CD4-positive, alpha-beta T cell (primary cell): ENCODE measurements at regions of chr16 and their contacts with region 1.

Region 1: GRCh38 chr16:56681939-56682702 is at the start of gene MT1X:
- DNase-seq: peak; percentile 72 to 94 (median 86)
- ATAC-seq: peak; percentile 99
- H3K4me3 ChIP-seq: peak within 1 kb of the TSS; percentile 83
- H3K4me3 Mint-ChIP-seq: peak within 1 kb of the TSS; percentile 96
- H3K27ac ChIP-seq: peak within 1 kb of the TSS; percentile 50 to 71
- H3K27ac Mint-ChIP-seq: peak within 1 kb of the TSS; percentile 93
- H3K4me1 ChIP-seq: peaks cover 28% of the 10 kb centered on the region
- H3K4me1 Mint-ChIP-seq: peaks cover 27% of the 10 kb centered on the region
- H3K27me3 ChIP-seq: no peaks in the 10 kb centered on the region
- H3K27me3 Mint-ChIP-seq: no peaks in the 10 kb centered on the region
- CTCF ChIP-seq: no peak
- total RNA-seq, gene MT1X: 10.9 to 14.1 TPM

Region 2: GRCh38 chr16:56591377-56592060 is 90.6 kb before region 1 on chr16:
- CTCF ChIA-PET with region 1: no interaction called
- POLR2A ChIA-PET with region 1: no interaction called
- intact Hi-C with region 1: no loop called
- DNase-seq: no peak
- ATAC-seq: no peak
- H3K4me3 ChIP-seq: no peak overlapping the region
- H3K4me3 Mint-ChIP-seq: no peak overlapping the region
- H3K27ac ChIP-seq: no peak overlapping the region
- H3K27ac Mint-ChIP-seq: no peak overlapping the region
- H3K4me1 ChIP-seq: peaks cover 12% of the 10 kb centered on the region
- H3K4me1 Mint-ChIP-seq: peaks cover 9% of the 10 kb centered on the region
- H3K27me3 ChIP-seq: peaks cover 17 to 18% of the 10 kb centered on the region in 2 experiments
- H3K27me3 Mint-ChIP-seq: peaks cover 26% of the 10 kb centered on the region
- CTCF ChIP-seq: no peak

Region 3: GRCh38 chr16:56667581-56668571 is 14.2 kb before region 1 on chr16 and contains the start of gene MT1G:
- CTCF ChIA-PET with region 1: no interaction called
- POLR2A ChIA-PET with region 1: interaction called, 11 read pairs
- intact Hi-C with region 1: no loop called
- DNase-seq: peak in 5 of 14 experiments; percentile 4 to 47 (median 20)
- ATAC-seq: peak; percentile 41
- H3K4me3 ChIP-seq: no peak within 1 kb of the TSS
- H3K4me3 Mint-ChIP-seq: peak within 1 kb of the TSS; percentile 34
- H3K27ac ChIP-seq: no peak within 1 kb of the TSS
- H3K27ac Mint-ChIP-seq: no peak within 1 kb of the TSS
- H3K4me1 ChIP-seq: peaks cover 27% of the 10 kb centered on the region
- H3K4me1 Mint-ChIP-seq: peaks cover 22% of the 10 kb centered on the region
- H3K27me3 ChIP-seq: peaks cover 48 to 59% of the 10 kb centered on the region in 2 experiments
- H3K27me3 Mint-ChIP-seq: peaks cover 96% of the 10 kb centered on the region
- CTCF ChIP-seq: no peak
- total RNA-seq, gene MT1G: not detected